AG04450 (cell line): ENCODE measurements at regions of chr11 and their contacts with region 1.

Region 1: GRCh38 chr11:47932544-47932943 is 47.8 kb upstream of the PTPRJ start:
- DNase-seq: no peak
- H3K4me3 ChIP-seq: no peak overlapping the region
- H3K27ac ChIP-seq: no peak overlapping the region
- H3K27me3 ChIP-seq: no peaks in the 10 kb centered on the region
- CTCF ChIP-seq: no peak

Region 2: DNA sequence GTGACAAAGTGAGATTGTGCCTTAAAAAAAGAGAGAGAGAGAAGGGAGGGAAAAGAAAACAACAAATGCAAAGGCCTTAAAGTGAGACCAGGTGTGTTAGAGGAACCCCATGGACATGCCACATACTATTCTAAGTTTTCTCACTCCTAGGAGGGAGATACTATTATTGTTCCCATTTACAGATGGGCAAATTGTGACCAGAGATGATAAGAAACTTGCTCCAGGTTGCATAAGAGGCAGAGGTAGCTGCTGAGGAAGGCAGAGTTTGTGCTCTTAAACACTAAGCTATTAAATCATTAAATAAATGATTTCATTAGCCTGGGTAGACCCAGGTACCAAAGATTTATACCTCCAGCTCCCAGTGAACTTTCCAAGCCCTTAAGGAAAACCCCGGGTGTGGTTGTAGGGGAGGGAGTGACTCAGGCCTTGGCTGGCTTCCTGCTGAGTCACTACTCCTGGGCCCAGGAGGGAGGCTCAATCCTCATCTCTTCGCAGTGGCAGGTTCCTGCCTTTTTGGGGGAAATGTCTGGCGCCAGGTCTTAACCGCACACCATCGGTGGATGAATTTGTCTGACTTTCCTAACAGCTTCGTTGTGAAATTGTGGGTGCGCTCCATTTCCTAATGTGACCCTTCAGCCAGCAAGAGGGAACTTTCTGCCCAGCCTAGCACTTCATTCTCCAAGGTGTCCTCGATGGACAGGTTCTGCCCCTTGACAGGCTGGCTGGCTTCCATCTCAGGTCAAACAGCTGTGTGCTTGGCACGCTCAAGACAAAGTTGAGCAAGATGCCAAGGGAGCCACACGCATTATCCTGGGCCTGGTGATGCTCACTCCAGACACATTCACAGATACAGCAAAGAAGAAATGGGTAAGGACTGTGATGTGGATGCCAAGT is 14.4 kb after region 1 on chr11:
- CTCF ChIA-PET with region 1: interaction called, 22 read pairs
- POLR2A ChIA-PET with region 1: interaction called, 3 read pairs
- DNase-seq: peak; percentile 80
- H3K4me3 ChIP-seq: no peak overlapping the region
- H3K27ac ChIP-seq: peak overlapping the region; percentile 54
- H3K27me3 ChIP-seq: no peaks in the 10 kb centered on the region
- CTCF ChIP-seq: no peak

Region 3: GRCh38 chr11:47981667-47982404 is 49.3 kb after region 1 on chr11:
- CTCF ChIA-PET with region 1: interaction called, 13 read pairs
- POLR2A ChIA-PET with region 1: no interaction called
- DNase-seq: no peak
- H3K4me3 ChIP-seq: peak overlapping the region; percentile 64
- H3K27ac ChIP-seq: no peak overlapping the region
- H3K27me3 ChIP-seq: no peaks in the 10 kb centered on the region
- CTCF ChIP-seq: no peak

Region 4: GRCh38 chr11:48034926-48035871 is 102.7 kb after region 1 on chr11:
- CTCF ChIA-PET with region 1: no interaction called
- POLR2A ChIA-PET with region 1: no interaction called
- DNase-seq: no peak
- H3K4me3 ChIP-seq: no peak overlapping the region
- H3K27ac ChIP-seq: no peak overlapping the region
- H3K27me3 ChIP-seq: no peaks in the 10 kb centered on the region
- CTCF ChIP-seq: no peak

Region 5: DNA sequence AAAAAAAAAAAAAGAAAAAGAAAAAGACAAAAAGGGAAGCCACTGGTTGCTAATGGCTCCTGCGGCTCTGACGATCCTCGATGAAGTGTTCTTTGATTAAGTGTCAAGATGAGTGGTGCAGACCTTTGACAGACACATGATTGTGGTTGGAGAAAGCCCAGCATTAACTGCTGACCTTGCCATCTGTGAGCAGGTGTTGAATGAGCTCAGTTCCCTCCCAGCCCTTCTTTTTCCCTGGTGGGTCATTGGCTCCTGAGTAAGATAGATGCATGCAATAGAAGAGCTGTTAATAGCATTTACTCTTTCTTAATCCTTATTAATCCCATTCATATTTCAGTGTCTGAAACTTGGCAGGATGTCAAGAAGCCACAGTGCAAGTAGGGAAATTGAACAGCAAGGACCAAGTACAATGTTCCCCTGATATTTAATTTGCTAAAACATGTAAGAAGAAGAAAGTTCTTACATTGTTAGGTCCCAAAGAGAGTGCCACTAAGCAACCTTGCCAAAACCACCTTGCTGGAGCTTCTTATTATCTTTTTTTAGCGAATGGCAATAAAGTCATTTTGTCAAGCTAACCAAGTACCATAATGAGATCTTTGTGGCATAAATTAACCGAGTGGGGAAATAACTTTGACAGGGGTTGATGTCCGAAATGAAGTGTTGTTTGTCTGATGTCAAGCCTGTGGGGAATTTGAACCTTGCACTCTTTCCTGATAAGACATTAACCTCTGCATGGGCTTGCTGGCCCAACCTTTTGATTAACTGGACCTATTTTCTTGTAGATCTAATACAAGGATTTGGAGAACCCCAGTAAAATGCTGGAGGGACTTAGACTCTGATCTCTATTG is 161.5 kb after region 1 on chr11:
- CTCF ChIA-PET with region 1: interaction called, 14 read pairs
- POLR2A ChIA-PET with region 1: no interaction called
- DNase-seq: no peak
- H3K4me3 ChIP-seq: no peak overlapping the region
- H3K27ac ChIP-seq: no peak overlapping the region
- H3K27me3 ChIP-seq: no peaks in the 10 kb centered on the region
- CTCF ChIP-seq: no peak

Region 6: GRCh38 chr11:48116437-48117228 is 184.1 kb after region 1 on chr11:
- CTCF ChIA-PET with region 1: interaction called, 315 read pairs
- POLR2A ChIA-PET with region 1: no interaction called
- DNase-seq: no peak
- H3K4me3 ChIP-seq: no peak overlapping the region
- H3K27ac ChIP-seq: no peak overlapping the region
- H3K27me3 ChIP-seq: no peaks in the 10 kb centered on the region
- CTCF ChIP-seq: peak; percentile 36